PC-9 (cell line): ENCODE measurements at regions of chr9 and their contacts with region 1.

Region 1: GRCh38 chr9:127734747-127735529 is at the start of gene TOR2A:
- DNase-seq: peak; percentile 89 to 99
- H3K4me3 ChIP-seq: peak within 1 kb of the TSS; percentile 61
- H3K27ac ChIP-seq: no peak within 1 kb of the TSS
- H3K4me1 ChIP-seq: peaks cover 7% of the 10 kb centered on the region
- H3K27me3 ChIP-seq: no peaks in the 10 kb centered on the region
- CTCF ChIP-seq: peak; percentile 96
- total RNA-seq, gene TOR2A: 16.4 and 19.7 TPM in 2 replicates

Region 2: DNA sequence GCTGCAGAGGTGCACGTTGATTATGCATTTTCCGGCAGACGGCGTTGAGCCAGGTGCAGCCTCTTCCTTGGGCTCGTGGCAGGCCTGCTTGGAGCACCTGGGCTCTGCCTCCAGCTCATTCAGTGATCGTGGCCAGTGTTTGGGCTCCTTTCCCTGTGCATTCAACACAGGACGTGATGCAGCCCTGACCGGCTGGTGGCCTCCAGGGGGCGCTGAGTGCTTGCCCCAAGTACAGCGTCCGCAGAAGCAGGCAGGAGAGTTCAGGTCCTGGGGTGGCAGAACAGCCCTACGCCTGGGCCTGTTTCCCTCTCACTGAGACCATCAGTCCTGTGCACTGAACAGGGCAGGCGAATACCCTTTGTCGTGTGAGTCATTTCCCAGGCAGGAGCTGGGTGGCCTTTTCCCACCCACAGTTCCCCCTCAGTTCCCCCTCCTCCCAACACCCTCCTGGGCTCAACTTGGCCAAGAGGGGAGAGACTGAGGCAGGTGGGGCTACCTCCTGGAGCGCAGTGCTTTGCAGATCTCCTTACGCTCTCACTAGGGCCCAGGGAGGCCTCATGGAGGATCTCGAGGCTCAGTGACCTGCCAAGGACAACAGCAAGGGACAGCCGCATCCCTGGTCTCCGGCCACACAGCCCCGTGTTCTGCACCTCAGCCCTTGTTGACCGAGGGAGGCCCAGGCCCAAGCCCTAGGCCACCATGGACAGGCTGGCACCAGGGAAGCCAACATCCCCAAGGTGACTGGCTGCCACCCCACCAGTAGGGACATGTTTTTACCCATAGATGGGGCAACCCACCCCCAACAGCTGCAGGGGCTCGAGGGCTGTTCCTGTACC is 230.8 kb before region 1 on chr9:
- CTCF ChIA-PET with region 1: no interaction called
- POLR2A ChIA-PET with region 1: no interaction called
- intact Hi-C with region 1: loop called (anchors 1 kb)
- DNase-seq: peak; percentile 60 to 85
- H3K4me3 ChIP-seq: no peak overlapping the region
- H3K27ac ChIP-seq: no peak overlapping the region
- H3K4me1 ChIP-seq: no peaks in the 10 kb centered on the region
- H3K27me3 ChIP-seq: no peaks in the 10 kb centered on the region
- CTCF ChIP-seq: peak; percentile 85

Region 3: DNA sequence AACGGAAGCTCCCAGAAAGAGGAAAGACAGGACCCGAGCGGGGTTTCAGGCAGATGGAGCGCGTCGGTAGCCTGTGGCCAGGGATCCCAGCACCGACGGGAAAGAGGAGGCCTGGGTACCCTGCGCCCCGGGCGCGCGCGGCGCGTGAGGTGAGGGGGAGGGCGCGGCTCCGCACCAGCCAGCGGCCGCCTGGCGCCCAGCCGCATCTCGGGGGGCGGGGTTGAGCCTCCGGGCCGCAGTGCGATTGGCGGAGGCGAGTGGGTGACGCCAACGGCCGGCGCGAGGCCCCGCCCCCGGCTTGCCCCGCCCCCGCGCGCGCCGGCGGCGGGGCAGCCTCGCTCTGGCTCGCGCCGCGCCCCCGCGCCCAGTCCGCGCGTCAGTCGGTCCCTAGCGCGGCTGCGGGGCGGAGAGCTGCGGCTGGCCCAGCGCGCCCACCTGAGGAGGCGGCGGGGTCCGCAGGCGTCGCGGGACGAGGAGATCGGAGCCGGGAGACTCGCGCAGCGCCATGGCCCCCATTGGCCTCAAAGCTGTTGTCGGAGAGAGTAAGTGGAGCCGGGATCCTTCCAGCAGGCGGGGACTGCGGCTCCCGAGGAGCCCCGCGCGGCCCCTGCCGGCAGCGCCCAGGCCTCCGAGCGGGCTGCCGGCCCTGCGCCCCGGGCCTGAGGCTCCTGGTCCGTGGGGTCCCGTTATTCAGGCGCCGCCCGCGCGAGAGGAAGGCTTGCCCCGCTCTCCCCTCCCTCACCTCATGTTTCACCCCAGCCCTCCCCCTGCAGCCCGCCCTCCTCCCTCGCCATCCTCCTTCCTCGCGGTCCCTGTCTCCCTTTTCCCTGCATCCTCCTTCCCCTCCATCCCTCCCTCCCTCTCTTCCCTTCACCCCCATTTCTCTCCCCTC is 122.8 kb before region 1 on chr9 and contains the start of gene STXBP1:
- CTCF ChIA-PET with region 1: interaction called, 3 read pairs
- POLR2A ChIA-PET with region 1: no interaction called
- intact Hi-C with region 1: loop called (anchors 2 kb)
- DNase-seq: peak in 1 of 2 experiments; percentile 95
- H3K4me3 ChIP-seq: peak within 1 kb of the TSS; percentile 68
- H3K27ac ChIP-seq: no peak within 1 kb of the TSS
- H3K4me1 ChIP-seq: peaks cover 40% of the 10 kb centered on the region
- H3K27me3 ChIP-seq: no peaks in the 10 kb centered on the region
- CTCF ChIP-seq: no peak
- total RNA-seq, gene STXBP1: 35.1 and 44.0 TPM in 2 replicates

Region 4: DNA sequence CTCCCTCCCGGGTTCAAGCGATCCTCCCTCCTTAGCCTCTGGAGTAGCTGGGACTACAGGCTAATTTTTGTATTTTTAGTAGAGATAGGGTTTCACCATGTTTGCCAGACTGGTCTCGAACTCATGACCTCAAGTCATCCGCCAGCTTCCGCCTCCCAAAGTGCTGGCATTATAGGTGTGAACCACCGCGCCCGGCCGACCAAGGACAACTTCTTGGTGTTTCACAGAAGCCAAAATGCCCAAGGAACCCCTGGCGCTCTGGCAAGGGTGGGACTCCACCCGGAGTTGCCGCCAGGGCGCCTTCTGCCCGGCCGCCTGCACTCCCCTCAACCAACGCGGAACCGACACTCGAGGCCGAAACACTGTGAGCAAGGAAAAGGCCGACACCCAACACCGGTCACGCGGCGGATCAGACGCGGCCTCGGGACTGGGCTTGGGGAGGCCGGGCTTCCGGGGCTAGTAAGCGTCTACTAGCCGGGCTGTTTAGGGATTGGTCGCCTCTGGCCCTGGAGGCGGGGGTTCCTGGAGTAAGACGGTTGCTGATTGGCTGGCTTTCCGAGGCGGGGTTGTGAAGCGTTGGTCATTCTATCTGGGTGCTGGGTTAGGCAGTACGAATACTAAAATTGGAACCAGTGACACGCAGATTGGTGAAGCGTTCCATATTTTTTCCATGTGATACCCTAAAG is 35.8 kb before region 1 on chr9:
- CTCF ChIA-PET with region 1: no interaction called
- POLR2A ChIA-PET with region 1: no interaction called
- intact Hi-C with region 1: no loop called
- DNase-seq: peak; percentile 88 to 97
- H3K4me3 ChIP-seq: peak overlapping the region; percentile 40; the same call in 1 of the 2 replicates
- H3K27ac ChIP-seq: no peak overlapping the region
- H3K4me1 ChIP-seq: peaks cover 4% of the 10 kb centered on the region
- H3K27me3 ChIP-seq: no peaks in the 10 kb centered on the region
- CTCF ChIP-seq: no peak

Region 5: GRCh38 chr9:127785023-127785932 is 50.3 kb after region 1 on chr9:
- CTCF ChIA-PET with region 1: interaction called, 9 read pairs
- POLR2A ChIA-PET with region 1: no interaction called
- intact Hi-C with region 1: loop called (anchors 1 kb)
- DNase-seq: peak; percentile 47 to 91
- H3K4me3 ChIP-seq: peak overlapping the region; percentile 99
- H3K27ac ChIP-seq: no peak overlapping the region
- H3K4me1 ChIP-seq: peaks cover 8% of the 10 kb centered on the region
- H3K27me3 ChIP-seq: no peaks in the 10 kb centered on the region
- CTCF ChIP-seq: peak; percentile 94

Region 6: DNA sequence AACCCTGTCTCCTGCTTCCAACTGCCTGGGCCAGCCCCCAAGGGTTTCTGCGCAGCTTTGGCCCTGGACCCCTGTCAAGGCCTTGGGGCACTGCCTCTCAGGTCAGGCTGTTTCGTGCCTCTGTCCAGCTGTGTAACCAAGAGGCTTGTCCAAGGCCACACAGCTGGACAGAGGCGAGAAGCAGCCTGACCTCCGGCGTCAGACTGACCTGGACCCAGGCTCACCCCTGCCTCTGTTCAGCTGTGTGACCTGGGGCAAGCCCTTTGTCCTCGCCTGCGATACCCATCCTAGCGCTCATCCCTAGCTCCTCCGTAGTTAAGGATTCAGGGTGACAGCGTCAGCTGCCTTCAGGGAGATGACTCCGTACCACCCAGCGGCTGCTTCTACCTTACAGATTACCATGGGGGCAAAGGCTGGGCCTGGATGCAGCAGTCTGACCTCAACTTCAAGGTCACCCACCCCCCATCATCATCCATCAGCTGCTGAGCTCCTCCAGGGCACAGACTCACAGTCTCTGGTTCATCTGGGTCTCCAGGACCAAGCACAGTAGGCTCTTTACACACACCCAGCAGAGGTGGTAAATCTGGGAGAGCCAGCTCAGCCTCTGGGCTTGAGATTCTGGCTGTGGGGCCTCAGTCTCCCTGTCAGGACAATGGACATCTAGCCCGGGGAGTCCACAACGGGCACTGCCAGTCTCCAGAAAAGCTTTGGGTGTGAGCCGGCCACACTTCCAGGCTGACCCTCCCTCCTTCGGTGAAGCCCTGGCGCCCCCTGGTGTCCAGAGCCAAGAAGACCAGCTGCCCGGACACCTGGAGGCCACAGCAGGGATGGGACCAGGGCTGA is 134.6 kb after region 1 on chr9:
- CTCF ChIA-PET with region 1: interaction called, 9 read pairs
- POLR2A ChIA-PET with region 1: no interaction called
- intact Hi-C with region 1: loop called (anchors 1 kb)
- DNase-seq: peak; percentile 64 to 94
- H3K4me3 ChIP-seq: no peak overlapping the region
- H3K27ac ChIP-seq: no peak overlapping the region
- H3K4me1 ChIP-seq: peaks cover 4% of the 10 kb centered on the region; the same call in 1 of the 2 replicates
- H3K27me3 ChIP-seq: no peaks in the 10 kb centered on the region
- CTCF ChIP-seq: peak; percentile 91

Region 7: GRCh38 chr9:127916665-127917613 is 182.0 kb after region 1 on chr9 and contains the start of gene ST6GALNAC4:
- CTCF ChIA-PET with region 1: interaction called, 4 read pairs
- POLR2A ChIA-PET with region 1: interaction called, 5 read pairs
- intact Hi-C with region 1: loop called (anchors 1 kb)
- DNase-seq: peak; percentile 61 to 95
- H3K4me3 ChIP-seq: peak within 1 kb of the TSS; percentile 92
- H3K27ac ChIP-seq: peak within 1 kb of the TSS; percentile 97
- H3K4me1 ChIP-seq: peaks cover 64% of the 10 kb centered on the region
- H3K27me3 ChIP-seq: no peaks in the 10 kb centered on the region
- CTCF ChIP-seq: no peak
- total RNA-seq, gene ST6GALNAC4: 28.3 and 44.3 TPM in 2 replicates